Sciatic nerve (tissue), 2 donors: ENCODE measurements at regions of chr2 and their contacts with region 1.

Region 1: GRCh38 chr2:3754280-3754679 is 50.9 kb downstream of the DCDC2C start:
- DNase-seq: no peak
- ATAC-seq: no peak

Region 2: DNA sequence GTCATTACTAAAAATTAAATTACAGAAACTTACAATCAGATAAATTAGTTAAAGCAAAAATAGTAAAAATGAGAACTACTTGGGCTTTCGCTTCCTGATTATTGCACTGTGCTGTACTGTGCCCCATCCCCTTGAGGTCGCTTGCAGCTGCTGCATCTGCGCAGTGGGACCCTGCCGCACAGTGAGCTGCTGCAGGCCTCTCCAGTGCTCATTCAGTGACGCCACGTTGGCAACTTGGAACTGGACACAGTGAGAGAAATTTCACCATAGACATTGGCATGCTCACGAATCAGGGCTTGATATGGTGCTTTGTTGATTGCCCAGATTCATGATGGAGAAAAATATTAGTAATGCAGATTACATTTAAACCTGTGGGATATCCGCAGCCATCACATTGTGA is 1132.4 kb before region 1 on chr2:
- intact Hi-C with region 1: loop called (anchors 5 kb)
- DNase-seq: no peak
- ATAC-seq: peak; percentile 58